Heart left ventricle (tissue), 16 donors: ENCODE measurements at regions of chr7 and their contacts with region 1.

Region 1: GRCh38 chr7:118104812-118105441 is 79.0 kb upstream of the LSM8 start:
- DNase-seq: no peak
- ATAC-seq: no peak
- H3K4me3 ChIP-seq: no peak overlapping the region
- H3K27ac ChIP-seq: no peak overlapping the region
- H3K4me1 ChIP-seq: no peaks in the 10 kb centered on the region
- H3K27me3 ChIP-seq: no peaks in the 10 kb centered on the region
- CTCF ChIP-seq: peak; percentile 19 to 62 (median 42)
- POLR2A ChIP-seq: no peak

Region 2: DNA sequence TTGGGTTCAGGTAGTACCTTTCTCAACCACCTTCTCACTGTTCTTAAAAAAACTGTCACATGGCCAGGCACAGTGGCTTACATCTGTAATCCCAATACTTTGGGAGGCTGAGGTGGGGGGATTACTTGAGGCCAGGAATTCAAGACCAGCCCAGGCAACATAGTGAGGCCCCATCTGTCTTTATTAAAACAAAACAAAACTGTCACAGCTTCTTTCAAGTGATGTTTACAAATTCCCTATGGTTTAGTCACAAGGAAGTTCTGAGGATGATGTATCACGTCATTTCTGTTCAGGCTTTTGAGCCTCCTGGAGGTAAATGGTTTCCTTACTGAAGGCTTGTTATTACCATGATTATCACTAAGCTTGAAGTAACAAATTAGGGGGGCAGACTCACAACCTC is 438.9 kb before region 1 on chr7:
- intact Hi-C with region 1: no loop called
- DNase-seq: no peak
- ATAC-seq: no peak
- H3K4me3 ChIP-seq: no peak overlapping the region
- H3K27ac ChIP-seq: no peak overlapping the region
- H3K4me1 ChIP-seq: no peaks in the 10 kb centered on the region
- H3K27me3 ChIP-seq: no peaks in the 10 kb centered on the region
- CTCF ChIP-seq: no peak
- POLR2A ChIP-seq: no peak

Region 3: GRCh38 chr7:117741962-117742361 is 363.0 kb before region 1 on chr7:
- intact Hi-C with region 1: loop called in 4 of 10 experiments (anchors 5 to 10 kb)
- DNase-seq: no peak
- ATAC-seq: no peak
- H3K4me3 ChIP-seq: no peak overlapping the region
- H3K27ac ChIP-seq: no peak overlapping the region
- H3K4me1 ChIP-seq: no peaks in the 10 kb centered on the region
- H3K27me3 ChIP-seq: no peaks in the 10 kb centered on the region
- CTCF ChIP-seq: no peak
- POLR2A ChIP-seq: no peak

Region 4: DNA sequence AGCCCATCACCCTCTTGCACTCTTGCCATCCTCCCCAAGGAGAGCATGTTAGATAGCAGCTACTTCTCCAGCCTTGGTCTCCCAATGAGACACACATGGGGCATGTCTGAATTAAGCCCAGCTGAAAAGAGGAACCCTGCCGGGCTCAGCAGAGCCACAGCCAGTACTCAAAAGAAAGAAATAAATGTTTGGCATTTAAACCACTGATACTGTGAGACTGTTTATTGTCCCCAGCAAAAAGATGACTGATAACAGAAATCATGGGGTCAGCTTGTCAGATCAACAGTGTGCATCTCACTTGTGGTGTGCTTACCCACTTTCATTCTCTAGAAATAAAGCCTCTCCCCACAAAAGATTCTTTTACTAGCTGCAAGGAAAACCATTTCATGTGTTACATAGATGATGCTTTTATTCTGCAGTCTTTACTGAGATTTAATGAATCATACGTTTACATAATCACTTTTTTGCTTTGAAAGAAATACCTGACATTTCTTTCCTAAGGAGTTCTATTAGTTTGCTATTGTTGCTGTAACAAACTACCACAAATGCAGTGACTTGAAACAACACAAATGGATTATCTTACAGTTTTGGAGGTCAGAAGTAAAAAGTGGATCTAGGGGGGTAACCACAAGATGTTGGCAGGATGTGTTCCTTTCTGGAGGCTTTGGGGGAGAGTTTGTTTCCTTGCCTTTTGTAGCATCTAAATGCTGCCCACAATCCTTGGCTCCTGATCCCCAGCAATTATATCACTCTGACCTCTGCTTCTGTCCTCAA is 140.5 kb after region 1 on chr7:
- intact Hi-C with region 1: no loop called
- DNase-seq: no peak
- ATAC-seq: no peak
- H3K4me3 ChIP-seq: no peak overlapping the region
- H3K27ac ChIP-seq: no peak overlapping the region
- H3K4me1 ChIP-seq: no peaks in the 10 kb centered on the region
- H3K27me3 ChIP-seq: no peaks in the 10 kb centered on the region
- CTCF ChIP-seq: no peak
- POLR2A ChIP-seq: no peak